ENCODE measurements at regions of chr19 and their contacts with region 1.

Region 1: DNA sequence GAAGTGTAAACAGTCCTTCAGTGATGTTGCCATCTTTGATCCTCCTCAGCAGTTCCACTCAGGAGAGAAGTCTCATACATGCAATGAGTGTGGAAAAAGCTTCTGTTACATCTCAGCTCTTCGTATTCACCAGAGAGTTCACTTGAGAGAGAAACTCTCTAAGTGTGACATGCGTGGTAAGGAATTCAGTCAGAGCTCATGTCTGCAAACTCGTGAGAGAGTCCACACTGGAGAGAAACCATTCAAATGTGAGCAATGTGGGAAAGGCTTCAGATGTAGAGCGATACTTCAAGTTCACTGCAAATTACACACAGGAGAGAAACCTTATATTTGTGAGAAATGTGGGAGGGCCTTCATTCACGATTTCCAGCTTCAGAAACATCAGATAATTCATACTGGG is 7.7 kb downstream of the ZNF230 start:
- DNase-seq: no peak
- ATAC-seq: no peak
- H3K4me3 ChIP-seq: peak overlapping the region in 1 of 2 donors; percentile 30
- H3K4me3 Mint-ChIP-seq: no peak overlapping the region
- H3K27ac ChIP-seq: no peak overlapping the region
- H3K27ac Mint-ChIP-seq: no peak overlapping the region
- H3K4me1 ChIP-seq: no peaks in the 10 kb centered on the region
- H3K4me1 Mint-ChIP-seq: peaks cover 0 to 5% (median 3%) of the 10 kb centered on the region in 3 donors
- H3K27me3 ChIP-seq: no peaks in the 10 kb centered on the region
- H3K27me3 Mint-ChIP-seq: no peaks in the 10 kb centered on the region

Region 2: DNA sequence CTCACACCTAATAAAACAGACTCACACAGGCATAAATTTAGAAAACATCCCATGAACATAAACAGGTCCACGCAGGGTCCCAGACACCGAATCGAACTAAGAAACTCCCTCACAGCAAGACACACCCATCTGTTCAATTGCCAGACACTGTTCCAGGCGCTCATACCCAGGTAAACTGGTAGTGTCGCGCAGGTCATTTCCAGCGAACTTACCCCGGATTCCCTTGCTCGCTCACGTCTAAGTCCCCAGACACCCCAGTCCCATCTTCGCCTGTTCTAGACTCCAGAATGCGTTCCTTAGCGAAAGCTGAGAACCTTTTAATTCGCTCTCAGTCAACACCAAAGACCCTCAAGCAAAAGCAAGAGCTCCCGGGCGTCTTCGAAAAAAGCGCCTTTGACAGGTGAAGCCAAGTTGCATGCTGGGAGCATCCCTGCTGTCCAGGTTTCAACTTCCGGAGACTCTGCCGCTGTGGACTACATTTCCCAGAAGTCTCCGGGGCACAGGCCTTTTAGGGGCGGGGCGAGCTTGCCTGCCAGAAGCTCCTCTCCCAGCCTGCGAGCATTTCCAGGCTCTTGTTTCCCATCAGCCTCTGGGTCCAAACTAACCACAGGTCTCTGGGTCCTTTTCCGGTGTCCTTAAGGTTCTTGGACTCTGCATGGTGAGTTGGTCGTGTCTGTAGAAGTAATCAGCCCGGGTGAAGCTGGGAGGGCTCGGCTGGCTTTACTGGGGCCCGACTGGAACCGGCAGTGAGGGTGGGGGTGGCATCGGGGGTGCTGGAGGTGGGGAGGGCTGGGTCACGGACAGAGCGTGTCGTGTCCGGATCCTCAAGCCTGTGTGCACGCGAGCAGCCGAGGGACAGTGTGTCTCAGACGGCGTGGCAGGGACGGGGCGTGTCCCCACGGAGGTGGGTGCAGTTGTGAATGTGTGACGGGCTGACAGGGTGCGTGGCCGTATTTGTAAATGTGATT is 183.4 kb before region 1 on chr19 and contains the start of gene ZNF283:
- CTCF ChIA-PET with region 1: no interaction called
- POLR2A ChIA-PET with region 1: interaction called in 1 of 2 experiments, 18 read pairs
- DNase-seq: peak; percentile 54 to 85 (median 68)
- ATAC-seq: peak; percentile 94 to 99 (median 96)
- H3K4me3 ChIP-seq: peak within 1 kb of the TSS; percentile 73 to 86
- H3K4me3 Mint-ChIP-seq: peak within 1 kb of the TSS; percentile 88 to 90 (median 89)
- H3K27ac ChIP-seq: no peak within 1 kb of the TSS
- H3K27ac Mint-ChIP-seq: peak within 1 kb of the TSS; percentile 52 to 72
- H3K4me1 ChIP-seq: peaks cover 2 to 12% of the 10 kb centered on the region in 2 experiments
- H3K4me1 Mint-ChIP-seq: peaks cover 19 to 21% (median 19%) of the 10 kb centered on the region in 3 donors
- H3K27me3 ChIP-seq: peaks cover under 1 to 6% of the 10 kb centered on the region in 2 experiments
- H3K27me3 Mint-ChIP-seq: peaks cover 0 to 7% of the 10 kb centered on the region in 2 donors
- total RNA-seq, gene ZNF283: 5.4 to 19.0 (median 12.7) TPM

Measured in T-cell (primary cell).